Testis (tissue), 5 donors: ENCODE measurements at regions of chr7 and their contacts with region 1.

Region 1: GRCh38 chr7:142632291-142633134 is 116.8 kb upstream of the PRSS1 start:
- DNase-seq: peak; percentile 82
- H3K4me3 ChIP-seq: no peak overlapping the region
- H3K27ac ChIP-seq: no peak overlapping the region
- H3K4me1 ChIP-seq: peaks cover 4% of the 10 kb centered on the region
- H3K27me3 ChIP-seq: no peaks in the 10 kb centered on the region
- CTCF ChIP-seq: peak; percentile 65 to 86 (median 73)
- POLR2A ChIP-seq: no peak

Region 2: GRCh38 chr7:142811154-142811737 is 178.7 kb after region 1 on chr7:
- intact Hi-C with region 1: loop called (anchors 10 kb)
- DNase-seq: peak; percentile 38
- H3K4me3 ChIP-seq: no peak overlapping the region
- H3K27ac ChIP-seq: no peak overlapping the region
- H3K4me1 ChIP-seq: no peaks in the 10 kb centered on the region
- H3K27me3 ChIP-seq: no peaks in the 10 kb centered on the region
- CTCF ChIP-seq: peak; percentile 43 to 70 (median 64)
- POLR2A ChIP-seq: no peak